ENCODE measurements at regions of chr6 and their contacts with region 1.

Region 1: DNA sequence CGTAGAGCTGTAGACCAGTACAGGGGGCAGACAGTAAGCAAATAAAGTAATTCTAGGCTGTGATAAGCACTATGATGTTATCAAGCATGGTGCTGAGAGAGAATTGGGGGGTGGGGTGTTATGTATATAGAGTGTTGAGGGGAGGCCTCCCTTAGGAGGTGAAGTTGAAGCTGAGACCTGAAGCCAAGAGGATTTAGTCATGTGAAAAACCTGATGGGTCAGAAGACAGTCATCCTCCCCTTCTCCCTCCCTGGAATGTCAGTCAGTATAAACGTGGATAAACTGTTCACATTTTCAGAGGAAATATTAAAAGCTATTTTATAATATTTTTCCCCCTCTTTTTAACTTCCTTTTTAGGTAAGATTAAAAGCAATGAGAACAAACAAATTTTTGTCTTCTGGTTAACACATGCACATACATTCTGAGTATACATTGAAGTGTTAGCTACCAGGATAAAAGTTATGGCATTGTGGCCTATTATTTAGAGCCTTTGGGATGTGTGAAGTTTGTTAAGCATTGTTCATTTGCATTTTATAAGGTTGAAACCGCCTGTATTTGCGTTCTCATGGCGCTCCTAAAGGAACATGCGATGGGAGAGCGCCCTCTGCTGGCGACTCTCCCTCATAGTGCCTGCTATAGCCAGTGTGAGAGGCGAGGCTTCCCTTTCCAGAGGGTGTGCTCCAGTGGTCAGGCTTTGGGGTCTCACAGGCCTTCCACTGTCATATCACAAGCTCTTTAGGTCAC is 35.4 kb upstream of the MAPK13 start:
- DNase-seq: peak; percentile 90
- ATAC-seq: peak; percentile 82
- H3K4me3 Mint-ChIP-seq: no peak overlapping the region
- H3K27ac Mint-ChIP-seq: peak overlapping the region; percentile 67
- H3K4me1 Mint-ChIP-seq: peaks cover 32% of the 10 kb centered on the region
- H3K27me3 Mint-ChIP-seq: no peaks in the 10 kb centered on the region
- CTCF ChIP-seq: peak; percentile 96

Region 2: GRCh38 chr6:36042618-36043260 is 52.2 kb before region 1 on chr6:
- CTCF ChIA-PET with region 1: interaction called, 12 read pairs
- POLR2A ChIA-PET with region 1: no interaction called
- intact Hi-C with region 1: no loop called
- DNase-seq: no peak
- ATAC-seq: no peak
- H3K4me3 Mint-ChIP-seq: no peak overlapping the region
- H3K27ac Mint-ChIP-seq: no peak overlapping the region
- H3K4me1 Mint-ChIP-seq: peaks cover 50% of the 10 kb centered on the region
- H3K27me3 Mint-ChIP-seq: no peaks in the 10 kb centered on the region
- CTCF ChIP-seq: no peak

Region 3: GRCh38 chr6:36075656-36076055 is 19.3 kb before region 1 on chr6:
- CTCF ChIA-PET with region 1: interaction called, 31 read pairs
- POLR2A ChIA-PET with region 1: interaction called, 3 read pairs
- intact Hi-C with region 1: no loop called
- DNase-seq: peak; percentile 14
- ATAC-seq: peak; percentile 42
- H3K4me3 Mint-ChIP-seq: no peak overlapping the region
- H3K27ac Mint-ChIP-seq: no peak overlapping the region
- H3K4me1 Mint-ChIP-seq: peaks cover 21% of the 10 kb centered on the region
- H3K27me3 Mint-ChIP-seq: no peaks in the 10 kb centered on the region
- CTCF ChIP-seq: no peak

Region 4: GRCh38 chr6:36123257-36124139 is 28.6 kb after region 1 on chr6:
- CTCF ChIA-PET with region 1: interaction called, 16 read pairs
- POLR2A ChIA-PET with region 1: no interaction called
- intact Hi-C with region 1: no loop called
- DNase-seq: peak; percentile 95
- ATAC-seq: peak; percentile 85
- H3K4me3 Mint-ChIP-seq: no peak overlapping the region
- H3K27ac Mint-ChIP-seq: peak overlapping the region; percentile 71
- H3K4me1 Mint-ChIP-seq: peaks cover 84% of the 10 kb centered on the region
- H3K27me3 Mint-ChIP-seq: no peaks in the 10 kb centered on the region
- CTCF ChIP-seq: peak; percentile 41

Region 5: DNA sequence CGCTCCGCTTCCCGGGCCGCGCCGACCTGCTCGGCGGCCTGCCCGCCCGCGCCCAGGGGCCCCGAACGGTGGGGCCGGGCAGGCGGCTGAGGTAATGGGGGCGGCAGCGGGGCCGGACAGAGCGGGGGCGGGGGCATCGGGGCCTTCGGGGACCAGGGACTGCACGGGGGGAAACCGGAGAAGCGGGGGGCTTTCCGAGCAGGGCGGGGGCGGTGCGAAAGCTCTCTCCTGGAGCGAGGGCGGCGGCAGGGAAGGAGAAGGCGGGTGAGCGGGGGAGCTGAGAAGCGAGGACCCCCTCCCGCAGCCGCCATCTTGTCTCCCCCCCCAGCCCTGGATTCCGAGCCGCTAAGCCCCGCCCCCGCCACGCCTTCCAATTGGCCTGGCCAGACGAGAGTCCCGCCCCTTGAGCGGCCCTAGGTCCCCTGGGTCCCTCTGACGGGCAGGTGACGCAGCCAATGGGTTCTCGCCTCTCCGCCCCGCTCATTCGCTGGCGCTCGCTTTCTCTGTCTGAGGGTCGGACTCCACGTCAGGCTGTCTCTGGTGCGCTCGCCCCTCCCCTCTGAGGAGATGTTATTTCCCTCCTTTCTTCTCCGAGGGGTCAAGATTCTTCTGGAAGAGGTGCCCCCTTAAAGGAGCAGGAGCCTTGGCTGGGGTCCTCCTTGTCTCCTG is 102.1 kb after region 1 on chr6:
- CTCF ChIA-PET with region 1: interaction called, 10 read pairs
- POLR2A ChIA-PET with region 1: interaction called, 3 read pairs
- intact Hi-C with region 1: no loop called
- DNase-seq: peak; percentile 100
- ATAC-seq: peak; percentile 96
- H3K4me3 Mint-ChIP-seq: peak overlapping the region; percentile 87
- H3K27ac Mint-ChIP-seq: peak overlapping the region; percentile 94
- H3K4me1 Mint-ChIP-seq: peaks cover 56% of the 10 kb centered on the region
- H3K27me3 Mint-ChIP-seq: no peaks in the 10 kb centered on the region
- CTCF ChIP-seq: no peak